ENCODE measurements at regions of chr22 and their contacts with region 1.

Region 1: DNA sequence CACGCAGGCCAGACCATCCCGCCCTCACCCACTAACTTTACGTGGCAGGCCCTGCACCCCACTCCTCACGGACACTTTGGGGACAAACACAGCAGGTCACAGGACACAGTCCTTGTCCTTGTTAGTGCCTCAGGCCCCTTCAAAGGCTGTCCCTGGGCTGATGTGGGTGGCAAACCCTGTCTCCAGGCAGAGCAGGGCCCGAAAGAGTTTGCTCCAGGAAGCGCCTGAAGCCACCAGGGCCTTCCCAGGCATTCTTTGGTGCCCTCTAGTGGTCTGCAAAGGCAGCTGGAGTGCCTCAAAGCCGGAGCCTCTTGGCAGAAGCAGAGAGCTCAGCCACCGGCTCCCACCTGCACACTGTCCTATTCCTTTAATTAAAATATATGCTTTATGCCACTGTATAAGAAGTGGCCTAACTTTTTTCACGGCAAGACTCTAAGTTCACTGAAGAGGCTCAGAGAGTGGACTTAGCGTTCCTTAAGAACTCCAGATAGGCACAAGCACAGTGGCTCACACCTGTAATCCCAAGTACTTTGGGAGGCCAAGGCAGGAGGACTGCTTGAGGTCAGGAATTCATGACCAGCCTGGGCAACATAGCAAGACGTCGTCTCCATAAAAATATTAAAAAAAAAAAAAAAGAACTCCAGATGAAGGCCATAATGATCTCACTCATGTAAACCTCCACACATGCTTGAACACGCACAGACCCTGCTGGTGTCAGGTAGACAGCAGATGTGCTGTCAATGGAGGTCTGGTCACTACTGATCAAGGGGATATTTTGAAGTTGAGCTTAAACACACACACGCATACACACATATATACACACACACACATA is 11.1 kb downstream of the TXN2 start:
- DNase-seq: peak; percentile 81
- H3K4me3 ChIP-seq: no peak overlapping the region
- H3K27ac ChIP-seq: peak overlapping the region; percentile 26
- H3K4me1 ChIP-seq: peaks cover 35% of the 10 kb centered on the region
- H3K27me3 ChIP-seq: no peaks in the 10 kb centered on the region
- CTCF ChIP-seq: peak; percentile 90 to 97
- POLR2A ChIP-seq: no peak

Region 2: DNA sequence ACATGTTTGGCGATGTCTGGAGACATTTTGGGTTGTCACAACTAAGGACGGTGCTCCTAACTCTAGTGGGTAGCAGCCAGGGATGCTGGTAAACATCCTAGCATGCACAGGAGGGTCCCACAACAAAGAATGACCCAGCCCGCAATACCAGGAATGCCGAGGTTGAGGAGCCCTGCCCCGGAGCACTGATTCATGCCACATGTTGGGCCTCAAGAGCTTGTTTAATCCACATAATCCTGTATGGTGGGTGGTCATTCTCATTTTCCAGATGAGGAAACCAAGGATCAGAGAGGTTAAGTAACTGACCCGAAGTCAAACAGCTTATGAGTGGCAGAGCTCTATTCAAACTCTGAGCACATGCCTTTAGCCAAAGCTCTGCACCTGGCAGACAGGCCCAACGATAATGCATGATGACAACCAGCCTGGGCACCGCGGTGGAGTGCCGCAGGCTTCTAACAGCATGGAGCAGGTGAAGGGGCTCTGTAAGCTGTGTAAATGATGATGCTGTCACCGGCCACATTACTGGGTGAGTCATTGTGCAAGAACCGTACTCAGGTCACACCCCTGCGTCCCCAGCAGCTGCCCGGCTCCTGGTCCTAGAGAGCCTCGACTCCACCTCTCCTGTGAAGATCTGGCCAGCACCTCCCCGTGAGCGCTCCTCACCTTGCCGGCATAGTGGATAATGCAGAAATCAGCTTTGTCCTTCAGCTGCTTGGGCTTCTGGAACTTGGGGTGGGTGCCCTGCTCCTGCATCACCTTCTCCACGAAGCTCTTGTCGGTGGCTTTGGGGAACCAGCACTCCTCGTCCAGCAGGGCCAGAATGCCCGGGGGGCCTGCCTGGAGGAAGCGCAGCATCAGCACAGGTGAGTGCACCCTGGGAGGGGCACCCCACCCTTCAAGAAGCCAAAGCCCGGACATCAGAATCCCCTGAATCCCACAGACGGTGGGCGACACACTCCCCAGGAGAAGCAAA is 158.7 kb before region 1 on chr22:
- CTCF ChIA-PET with region 1: interaction called, 23 read pairs
- POLR2A ChIA-PET with region 1: interaction called, 3 read pairs
- dilution Hi-C with region 1: no loop called
- intact Hi-C with region 1: no loop called
- DNase-seq: no peak
- H3K4me3 ChIP-seq: no peak overlapping the region
- H3K27ac ChIP-seq: no peak overlapping the region
- H3K4me1 ChIP-seq: peaks cover 16% of the 10 kb centered on the region
- H3K27me3 ChIP-seq: no peaks in the 10 kb centered on the region
- CTCF ChIP-seq: no peak
- POLR2A ChIP-seq: peak; percentile 21

Region 3: DNA sequence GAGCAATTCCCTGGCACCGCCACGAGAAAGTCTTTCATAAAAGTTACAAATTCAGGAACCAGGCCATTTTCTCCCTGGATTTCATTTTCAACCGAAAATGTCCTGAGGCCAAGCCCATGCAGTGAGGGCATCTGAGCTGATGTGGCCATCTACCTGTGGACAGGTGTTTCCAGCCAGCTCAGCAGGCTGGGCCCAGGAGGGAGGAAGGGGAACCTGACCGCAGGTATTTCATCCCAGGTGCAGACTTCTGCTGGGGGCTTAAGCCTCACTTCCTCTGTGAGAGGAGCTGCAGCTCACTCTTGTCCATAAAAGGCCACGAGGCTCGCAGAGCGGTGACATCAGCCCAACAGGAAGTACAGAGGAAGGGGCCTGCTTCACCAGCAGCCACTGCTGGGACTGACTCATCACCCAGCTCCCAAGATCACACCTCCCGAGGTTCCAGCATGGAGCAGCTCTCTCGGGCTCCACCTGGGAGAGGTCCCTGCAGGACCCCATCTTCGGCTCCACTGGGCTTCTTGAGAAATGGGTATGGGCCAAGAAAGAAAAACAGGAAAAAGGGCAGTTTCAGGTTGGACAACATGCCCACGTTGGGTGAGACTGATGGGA is 139.0 kb before region 1 on chr22:
- CTCF ChIA-PET with region 1: interaction called, 56 read pairs
- POLR2A ChIA-PET with region 1: interaction called, 6 read pairs
- dilution Hi-C with region 1: no loop called
- intact Hi-C with region 1: loop called (anchors 1 kb)
- DNase-seq: peak; percentile 93
- H3K4me3 ChIP-seq: no peak overlapping the region
- H3K27ac ChIP-seq: peak overlapping the region; percentile 99
- H3K4me1 ChIP-seq: peaks cover 97% of the 10 kb centered on the region
- H3K27me3 ChIP-seq: no peaks in the 10 kb centered on the region
- CTCF ChIP-seq: peak in 1 of 2 donors; percentile 3
- POLR2A ChIP-seq: peak; percentile 67

Region 4: DNA sequence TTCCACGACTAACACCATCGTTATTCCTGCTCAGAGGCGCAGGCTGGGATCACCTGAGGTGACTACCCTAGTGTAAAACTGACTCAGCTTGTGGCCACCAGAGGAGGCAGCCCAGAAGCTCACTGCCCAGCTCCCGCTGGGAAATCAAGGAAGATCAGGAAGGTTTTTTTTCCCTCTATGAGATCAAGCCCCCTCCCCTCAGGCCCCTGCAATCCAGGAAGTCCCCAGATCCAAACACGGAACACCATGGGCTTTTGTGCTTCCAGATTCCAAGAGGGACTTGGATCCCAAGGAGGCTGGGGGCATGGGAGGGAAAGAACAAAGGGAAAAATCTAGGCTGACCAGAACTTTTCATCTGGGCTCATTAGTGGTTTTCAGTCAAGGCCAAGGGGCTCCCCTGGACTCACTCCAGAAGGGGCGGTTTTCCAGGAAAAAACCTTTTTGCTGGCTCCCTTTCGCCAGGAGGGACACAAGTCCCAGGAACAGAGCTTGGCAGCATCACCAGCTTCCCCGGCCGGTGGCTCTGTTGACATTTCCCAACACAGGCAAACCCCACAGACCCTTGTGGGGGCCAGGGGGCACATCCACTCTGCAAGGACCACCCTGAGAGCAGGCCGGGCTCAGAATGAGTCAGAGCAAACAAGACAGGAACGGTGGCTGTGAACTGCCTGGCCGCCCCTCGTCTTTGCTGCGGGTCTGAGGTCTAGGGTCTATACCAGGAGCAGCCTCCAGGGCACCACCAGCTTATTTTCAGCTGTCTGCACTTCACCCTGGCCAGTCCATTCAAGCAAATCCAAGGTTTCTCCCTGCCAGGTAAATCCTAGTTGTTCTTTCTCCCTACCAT is 119.4 kb before region 1 on chr22:
- CTCF ChIA-PET with region 1: interaction called, 12 read pairs
- POLR2A ChIA-PET with region 1: no interaction called
- dilution Hi-C with region 1: no loop called
- intact Hi-C with region 1: no loop called
- DNase-seq: peak; percentile 56
- H3K4me3 ChIP-seq: no peak overlapping the region
- H3K27ac ChIP-seq: peak overlapping the region; percentile 60
- H3K4me1 ChIP-seq: peaks cover 86% of the 10 kb centered on the region
- H3K27me3 ChIP-seq: no peaks in the 10 kb centered on the region
- CTCF ChIP-seq: no peak
- POLR2A ChIP-seq: no peak

Region 5: GRCh38 chr22:36365020-36365411 is 105.4 kb before region 1 on chr22:
- CTCF ChIA-PET with region 1: interaction called, 32 read pairs
- POLR2A ChIA-PET with region 1: interaction called, 3 read pairs
- dilution Hi-C with region 1: no loop called
- intact Hi-C with region 1: loop called (anchors 5 kb)
- DNase-seq: peak; percentile 94
- H3K4me3 ChIP-seq: no peak overlapping the region
- H3K27ac ChIP-seq: peak overlapping the region; percentile 88
- H3K4me1 ChIP-seq: peaks cover 92% of the 10 kb centered on the region
- H3K27me3 ChIP-seq: no peaks in the 10 kb centered on the region
- CTCF ChIP-seq: no peak
- POLR2A ChIP-seq: peak; percentile 70

Region 6: DNA sequence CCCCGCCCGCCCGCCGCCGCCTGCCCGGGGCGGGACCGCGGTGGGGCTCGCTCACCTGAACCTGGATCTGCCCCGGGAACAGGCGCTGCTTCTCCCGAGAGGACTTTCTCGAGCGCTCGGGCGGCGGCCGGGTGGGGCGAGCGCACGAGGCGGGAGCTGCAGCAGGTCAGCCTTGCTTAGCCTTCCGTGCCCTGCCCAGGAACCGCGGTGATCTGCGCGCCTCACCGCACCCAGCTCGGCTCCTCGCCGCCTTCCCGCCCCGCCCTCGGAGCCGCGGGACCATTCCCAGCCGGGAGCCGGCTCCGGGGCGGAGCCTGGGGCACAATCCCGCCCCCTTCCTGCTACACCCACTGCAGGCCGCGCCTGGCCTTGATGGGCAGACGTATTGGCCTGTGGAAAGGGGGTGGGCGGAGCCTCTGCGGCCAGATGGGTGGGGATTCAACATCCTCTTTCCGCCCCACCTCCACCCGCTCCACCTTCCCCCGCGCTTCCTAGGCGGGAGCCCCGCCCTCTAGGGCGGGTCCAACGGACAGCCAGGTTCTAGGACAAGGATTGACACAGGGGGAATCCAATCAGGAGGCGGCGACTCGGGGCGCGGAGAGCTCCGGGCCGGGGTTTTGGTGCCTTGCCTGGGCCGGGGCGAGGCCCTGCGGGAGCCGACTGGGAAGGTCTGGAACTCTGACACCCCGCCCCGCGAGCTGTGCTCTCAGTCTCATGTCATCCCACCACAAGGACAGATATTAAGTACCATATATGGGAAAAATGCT is 82.4 kb before region 1 on chr22 and contains the start of gene MYH9:
- CTCF ChIA-PET with region 1: interaction called, 28 read pairs
- POLR2A ChIA-PET with region 1: interaction called, 11 read pairs
- dilution Hi-C with region 1: no loop called
- intact Hi-C with region 1: loop called (anchors 1 kb)
- DNase-seq: peak; percentile 100
- H3K4me3 ChIP-seq: peak within 1 kb of the TSS; percentile 95 to 99 (median 97)
- H3K27ac ChIP-seq: peak within 1 kb of the TSS; percentile 92
- H3K4me1 ChIP-seq: peaks cover 27% of the 10 kb centered on the region
- H3K27me3 ChIP-seq: no peaks in the 10 kb centered on the region
- CTCF ChIP-seq: no peak
- POLR2A ChIP-seq: peak; percentile 98
- total RNA-seq, gene MYH9: 1,331 and 1,413 TPM in 2 replicates

Region 7: DNA sequence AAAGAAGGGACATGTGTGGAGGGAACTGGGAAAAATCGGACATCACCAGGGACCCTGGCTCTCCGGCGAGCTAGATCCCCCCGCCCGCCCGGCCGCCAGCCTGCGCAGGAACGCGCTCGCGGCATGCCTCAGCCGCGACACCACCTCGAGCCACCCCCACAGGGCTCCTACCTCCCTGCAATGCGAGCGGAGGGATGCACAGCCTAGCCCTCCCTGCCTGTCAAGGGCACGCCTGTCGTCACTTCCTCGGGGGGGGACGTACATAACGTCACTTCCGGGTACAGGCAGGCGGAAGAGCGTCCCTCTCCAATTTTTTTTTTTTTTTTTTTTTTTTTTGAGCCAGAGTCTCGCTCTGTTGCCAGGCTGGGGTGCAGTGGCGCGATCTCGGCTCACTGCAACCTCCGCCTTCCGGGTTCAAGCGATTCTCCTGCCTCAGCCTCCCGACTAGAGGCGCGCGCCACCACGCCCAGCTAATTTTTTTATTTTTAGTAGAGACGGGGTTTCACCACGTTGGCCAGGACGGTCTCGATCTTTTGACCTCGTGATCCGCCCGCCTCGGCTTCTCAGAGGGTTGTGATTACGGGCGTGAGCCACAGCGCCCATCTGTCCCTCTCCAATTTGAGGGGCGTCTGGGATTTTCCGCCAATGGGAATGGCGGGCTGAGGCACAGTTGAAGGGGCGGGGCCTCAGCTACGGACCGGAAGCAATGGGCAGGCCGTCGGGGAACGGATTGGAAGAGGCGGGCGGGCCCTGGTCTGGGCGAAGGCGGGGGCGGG is 11.2 kb after region 1 on chr22 and contains the start of gene TXN2:
- CTCF ChIA-PET with region 1: interaction called, 10 read pairs
- POLR2A ChIA-PET with region 1: interaction called, 9 read pairs
- dilution Hi-C with region 1: no loop called
- intact Hi-C with region 1: no loop called
- DNase-seq: peak; percentile 94
- H3K4me3 ChIP-seq: peak within 1 kb of the TSS; percentile 53 to 73 (median 67)
- H3K27ac ChIP-seq: peak within 1 kb of the TSS; percentile 89
- H3K4me1 ChIP-seq: peaks cover 8% of the 10 kb centered on the region
- H3K27me3 ChIP-seq: no peaks in the 10 kb centered on the region
- CTCF ChIP-seq: no peak
- POLR2A ChIP-seq: peak; percentile 97
- total RNA-seq, gene TXN2: 74.3 and 75.9 TPM in 2 replicates